ENCODE measurements at regions of chr1 and their contacts with region 1.

Region 1: DNA sequence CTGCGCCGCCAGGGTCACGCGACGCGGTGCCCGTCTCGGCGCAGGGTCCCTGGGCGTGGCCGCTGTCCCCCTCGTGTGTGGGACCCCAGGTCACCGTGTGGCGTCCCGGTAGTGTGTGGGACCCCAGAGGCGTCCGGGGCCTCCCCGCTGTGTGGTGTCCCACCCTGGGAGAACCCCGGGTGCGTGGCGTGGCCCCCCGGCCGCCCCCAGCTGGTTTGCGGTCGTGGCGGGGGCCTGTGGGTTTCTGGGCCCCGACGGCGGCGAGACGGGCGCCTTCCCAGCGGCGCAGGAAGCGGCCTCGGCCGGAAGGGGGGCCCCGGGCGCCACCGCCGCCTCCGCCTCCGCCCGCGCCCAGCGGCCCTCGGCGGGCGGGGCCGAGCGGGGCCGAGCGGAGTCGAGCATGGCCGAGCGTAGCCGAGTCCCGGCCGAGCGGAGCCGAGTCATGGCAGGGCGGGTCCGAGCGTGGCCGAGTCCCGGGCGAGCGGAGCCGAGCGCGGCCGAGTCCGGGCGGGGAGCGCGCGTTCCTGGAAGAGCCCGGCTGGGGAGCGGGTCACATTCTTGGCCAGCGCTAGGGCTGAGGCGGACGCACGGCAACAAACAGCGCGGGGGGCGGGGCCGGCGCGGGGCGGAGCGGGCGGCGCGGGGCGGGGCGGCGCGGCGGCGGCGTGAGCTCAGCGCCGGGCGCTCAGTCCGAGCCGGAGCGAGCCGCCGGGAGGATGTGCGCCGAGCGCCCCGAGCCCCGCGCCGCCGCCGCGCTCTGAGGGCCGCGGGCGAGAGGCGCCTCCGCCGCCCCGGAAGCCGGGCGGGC is 569 bp upstream of the SKI start:
- H3K4me3 ChIP-seq: peak overlapping the region; percentile 78
- H3K27ac ChIP-seq: peak overlapping the region; percentile 94
- H3K4me1 ChIP-seq: no peaks in the 10 kb centered on the region; the same call in 1 of the 2 replicates
- CTCF ChIP-seq: peak; percentile 26; the same call in 1 of the 2 replicates

Region 2: GRCh38 chr1:2055911-2056575 is 171.5 kb before region 1 on chr1:
- CTCF ChIA-PET with region 1: no interaction called
- POLR2A ChIA-PET with region 1: no interaction called
- H3K4me3 ChIP-seq: no peak overlapping the region
- H3K27ac ChIP-seq: no peak overlapping the region
- H3K4me1 ChIP-seq: no peaks in the 10 kb centered on the region; the same call in 1 of the 2 replicates
- CTCF ChIP-seq: no peak

Region 3: GRCh38 chr1:2205191-2205952 is 22.2 kb before region 1 on chr1:
- CTCF ChIA-PET with region 1: interaction called, 4 read pairs
- POLR2A ChIA-PET with region 1: interaction called, 21 read pairs
- H3K4me3 ChIP-seq: peak overlapping the region; percentile 19; the same call in 1 of the 2 replicates
- H3K27ac ChIP-seq: no peak overlapping the region; the same call in 1 of the 2 replicates
- H3K4me1 ChIP-seq: peaks cover 5% of the 10 kb centered on the region
- CTCF ChIP-seq: no peak

Region 4: DNA sequence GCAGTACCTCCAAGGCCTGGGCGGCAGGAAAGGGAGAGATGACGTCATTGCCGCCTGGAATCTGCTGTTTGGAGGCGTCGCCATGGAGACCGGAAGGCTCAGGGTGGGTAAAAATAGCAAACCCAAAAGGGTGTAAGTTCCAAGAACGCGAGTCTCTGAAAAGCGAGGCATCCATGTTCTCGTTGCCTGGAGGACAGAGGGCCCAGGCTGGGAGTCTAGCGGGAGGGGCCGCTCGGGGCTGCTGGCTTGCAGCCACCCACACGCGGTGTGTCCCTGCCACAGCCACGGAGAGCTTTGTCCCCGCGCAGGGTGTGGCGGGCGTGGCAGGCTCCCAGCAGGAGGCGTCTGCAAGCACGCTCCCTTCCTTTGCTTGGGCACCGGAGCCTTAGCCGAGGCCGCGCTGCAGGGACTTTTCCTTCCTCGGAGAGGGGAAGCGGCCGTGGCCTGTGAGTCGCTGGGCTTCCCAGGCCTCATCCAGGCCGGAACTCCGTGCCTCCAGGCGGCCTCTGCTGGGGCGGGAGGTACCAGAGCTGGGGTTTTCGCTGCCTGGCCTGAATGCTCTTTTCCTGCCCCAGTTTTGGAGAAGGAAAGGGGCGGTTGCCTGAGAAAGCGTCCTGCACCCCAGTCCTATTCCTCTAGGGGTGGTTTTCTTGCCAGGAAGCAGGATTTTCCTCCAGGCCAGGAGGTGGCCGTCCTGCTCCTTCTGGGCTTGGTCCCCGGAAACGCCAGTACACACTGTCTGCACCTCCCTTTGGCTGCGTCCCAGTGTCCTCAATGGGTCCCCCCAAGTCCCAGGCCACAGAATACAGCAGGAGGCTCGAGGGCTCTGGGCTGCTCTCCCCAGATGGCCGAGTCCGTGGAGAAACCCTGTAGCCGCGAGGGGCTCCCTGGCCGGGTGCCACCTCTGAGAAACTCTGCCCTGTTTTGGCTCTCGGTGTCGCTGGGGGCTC is 14.7 kb before region 1 on chr1:
- CTCF ChIA-PET with region 1: no interaction called
- POLR2A ChIA-PET with region 1: interaction called, 21 read pairs
- H3K4me3 ChIP-seq: peak overlapping the region; percentile 32
- H3K27ac ChIP-seq: peak overlapping the region; percentile 73
- H3K4me1 ChIP-seq: peaks cover 9% of the 10 kb centered on the region
- CTCF ChIP-seq: peak; percentile 82

Region 5: GRCh38 chr1:2314803-2315673 is 87.5 kb after region 1 on chr1:
- CTCF ChIA-PET with region 1: interaction called, 7 read pairs
- POLR2A ChIA-PET with region 1: interaction called, 12 read pairs
- H3K4me3 ChIP-seq: peak overlapping the region; percentile 48
- H3K27ac ChIP-seq: peak overlapping the region; percentile 30; the same call in 1 of the 2 replicates
- H3K4me1 ChIP-seq: peaks cover 13% of the 10 kb centered on the region
- CTCF ChIP-seq: 0 out of 2 replicates have a peak, but pooled peaks have one; percentile 34